Motor neuron (in vitro differentiated cells): ENCODE measurements at regions of chr17 and their contacts with region 1.

Region 1: GRCh38 chr17:39621523-39622379 is 5.0 kb upstream of the PPP1R1B start:
- ATAC-seq: peak; percentile 48 to 81 (median 74)
- H3K4me3 ChIP-seq: no peak overlapping the region
- H3K27ac ChIP-seq: no peak overlapping the region
- H3K4me1 ChIP-seq: peaks cover 6 to 12% of the 10 kb centered on the region in 2 donors

Region 2: DNA sequence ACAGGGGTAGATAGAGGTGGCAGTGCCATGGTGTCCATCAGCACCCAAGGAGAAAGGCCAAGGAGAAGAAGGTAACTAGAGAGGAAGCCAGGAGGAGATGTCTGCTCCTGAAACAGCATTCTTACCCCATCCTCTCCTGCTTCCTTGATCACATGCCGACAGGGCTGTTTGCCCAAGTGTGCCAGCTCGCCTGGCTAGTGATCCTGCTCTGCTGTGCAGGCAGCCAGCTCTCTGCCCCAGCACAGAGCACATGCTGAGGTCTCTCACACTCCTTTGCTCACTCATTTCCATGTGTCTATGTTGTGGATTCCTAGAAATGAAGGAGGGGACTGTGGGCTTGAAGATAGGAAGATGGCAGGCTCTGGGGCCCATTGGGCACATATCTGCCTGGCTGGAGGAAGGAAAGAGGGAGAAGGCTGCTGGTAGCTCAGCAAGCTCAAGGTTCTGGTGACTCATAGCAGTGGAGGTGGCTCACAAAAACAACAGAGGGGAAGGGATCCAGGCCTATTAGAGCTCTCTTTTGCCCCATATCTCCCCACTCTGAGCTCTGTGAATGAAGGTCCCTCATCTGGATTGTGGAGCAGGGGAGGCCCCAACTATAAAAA is 68.3 kb before region 1 on chr17:
- in situ Hi-C with region 1: loop called in 1 of 9 experiments (anchors 10 kb)
- ATAC-seq: peak in 1 of 8 experiments; percentile 79
- H3K4me3 ChIP-seq: no peak overlapping the region
- H3K27ac ChIP-seq: no peak overlapping the region
- H3K4me1 ChIP-seq: peaks cover 11 to 22% of the 10 kb centered on the region in 2 donors

Region 3: DNA sequence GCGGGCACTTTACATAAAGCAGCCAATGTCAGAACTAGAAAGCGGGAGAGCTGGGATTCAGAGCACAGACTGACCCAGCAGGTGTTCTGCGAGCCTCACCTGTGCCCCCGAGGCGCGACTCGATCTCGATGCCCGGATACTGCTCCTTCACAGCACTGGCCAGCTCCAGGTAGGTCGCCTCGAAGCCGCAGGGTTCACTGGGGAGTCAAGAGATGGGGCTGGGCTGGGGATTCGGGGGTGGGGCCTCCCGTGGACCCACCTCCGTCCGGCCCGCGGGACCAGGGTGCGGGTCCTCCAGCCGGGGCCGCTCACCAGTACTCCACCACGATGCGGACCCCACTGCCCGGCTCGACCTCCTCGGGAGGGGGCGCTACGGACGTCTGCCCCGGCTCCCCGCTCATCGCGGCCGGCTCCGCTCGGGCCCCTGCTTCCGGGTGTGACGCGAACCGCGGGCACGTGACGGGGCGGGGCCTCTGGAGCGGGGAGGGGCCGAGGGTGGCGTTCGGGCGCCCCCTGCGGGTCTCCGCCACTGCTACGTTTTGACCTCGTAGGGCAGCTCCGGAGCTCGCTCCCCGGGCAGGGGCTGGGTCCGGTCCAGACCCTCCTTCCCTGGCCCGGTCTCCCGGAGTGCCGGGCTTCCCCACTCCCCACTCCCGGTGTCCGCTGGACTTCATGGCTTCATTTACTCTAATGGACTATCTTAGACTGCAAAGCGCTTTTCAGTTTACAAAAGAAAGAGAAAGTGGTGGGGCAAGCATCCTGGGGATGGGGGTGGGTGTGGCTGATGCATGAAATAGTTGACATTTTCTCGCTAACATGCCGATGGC is 108.6 kb after region 1 on chr17 and contains the start of gene MIEN1:
- in situ Hi-C with region 1: loop called in 1 of 9 experiments (anchors 25 kb)
- ATAC-seq: peak; percentile 88 to 94 (median 90)
- H3K4me3 ChIP-seq: peak within 1 kb of the TSS; percentile 55 to 94 (median 83)
- H3K27ac ChIP-seq: peak within 1 kb of the TSS; percentile 10 to 69
- H3K4me1 ChIP-seq: peaks cover 0 to 4% of the 10 kb centered on the region in 2 donors
- total RNA-seq, gene MIEN1: 27.2 to 59.3 (median 40.5) TPM

Region 4: GRCh38 chr17:39754161-39754951 is 132.6 kb after region 1 on chr17:
- in situ Hi-C with region 1: loop called in 2 of 9 experiments (anchors 10 to 25 kb)
- ATAC-seq: peak; percentile 86 to 95 (median 90)
- H3K4me3 ChIP-seq: peak overlapping the region; percentile 38 to 51 (median 50)
- H3K27ac ChIP-seq: peak overlapping the region in 1 of 2 donors; percentile 63
- H3K4me1 ChIP-seq: peaks cover 0 to 3% of the 10 kb centered on the region in 2 donors